BJ (cell line): ENCODE measurements at regions of chr6 and their contacts with region 1.

Region 1: GRCh38 chr6:30942338-30943060 is 1.7 kb downstream of the MUCL3 start:
- DNase-seq: peak; percentile 35
- H3K4me3 ChIP-seq: no peak overlapping the region
- H3K27me3 ChIP-seq: peaks cover 10% of the 10 kb centered on the region
- CTCF ChIP-seq: peak; percentile 84

Region 2: DNA sequence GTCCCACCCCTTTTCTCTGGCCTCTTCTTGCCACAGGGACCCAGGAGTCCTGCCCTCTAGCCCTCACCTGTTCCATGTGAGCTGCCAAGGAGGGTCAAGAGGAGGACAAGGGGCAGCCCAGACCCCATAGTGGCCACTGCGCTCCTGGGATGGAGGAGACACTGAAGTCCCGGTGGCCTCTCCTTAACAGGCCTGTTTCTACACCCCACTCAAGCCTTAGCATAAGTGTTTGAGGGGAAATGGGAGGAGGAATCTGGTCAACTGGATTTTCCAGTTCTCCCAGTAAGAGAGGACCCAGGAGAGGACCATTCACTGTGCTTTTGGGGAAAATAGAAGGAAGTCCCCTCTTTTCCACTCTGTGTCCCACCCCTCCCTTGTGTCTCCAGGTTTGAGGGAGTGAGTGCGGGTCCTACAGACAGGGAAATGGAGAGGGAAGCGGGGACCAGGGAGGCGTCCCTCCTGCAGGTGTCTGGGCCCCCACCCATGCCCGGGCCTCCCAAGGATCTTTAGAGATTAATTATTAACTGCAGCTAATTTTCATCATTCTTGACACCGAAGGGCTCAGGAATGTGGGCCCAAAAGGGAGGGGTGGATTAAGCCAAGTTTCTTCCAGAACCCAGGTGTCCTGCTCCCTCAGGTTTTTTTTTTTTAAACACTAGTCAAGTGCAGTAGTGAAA is 10.4 kb before region 1 on chr6 and contains the start of gene SFTA2:
- CTCF ChIA-PET with region 1: interaction called, 16 read pairs
- POLR2A ChIA-PET with region 1: no interaction called
- DNase-seq: no peak
- H3K4me3 ChIP-seq: no peak within 1 kb of the TSS
- H3K27me3 ChIP-seq: no peaks in the 10 kb centered on the region; the same call in 1 of the 2 replicates
- CTCF ChIP-seq: no peak
- polyA plus RNA-seq, gene SFTA2: not detected in 2 replicates

Region 3: GRCh38 chr6:30955367-30956042 is 13.0 kb after region 1 on chr6:
- CTCF ChIA-PET with region 1: interaction called, 11 read pairs
- POLR2A ChIA-PET with region 1: no interaction called
- DNase-seq: no peak
- H3K4me3 ChIP-seq: peak overlapping the region; percentile 37
- H3K27me3 ChIP-seq: peaks cover 36% of the 10 kb centered on the region
- CTCF ChIP-seq: no peak

Region 4: GRCh38 chr6:31037682-31038081 is 95.2 kb after region 1 on chr6:
- CTCF ChIA-PET with region 1: interaction called, 12 read pairs
- POLR2A ChIA-PET with region 1: no interaction called
- DNase-seq: peak; percentile 39
- H3K4me3 ChIP-seq: no peak overlapping the region
- H3K27me3 ChIP-seq: no peaks in the 10 kb centered on the region; the same call in 1 of the 2 replicates
- CTCF ChIP-seq: no peak